ENCODE measurements at regions of chr7 and their contacts with region 1.

Region 1: DNA sequence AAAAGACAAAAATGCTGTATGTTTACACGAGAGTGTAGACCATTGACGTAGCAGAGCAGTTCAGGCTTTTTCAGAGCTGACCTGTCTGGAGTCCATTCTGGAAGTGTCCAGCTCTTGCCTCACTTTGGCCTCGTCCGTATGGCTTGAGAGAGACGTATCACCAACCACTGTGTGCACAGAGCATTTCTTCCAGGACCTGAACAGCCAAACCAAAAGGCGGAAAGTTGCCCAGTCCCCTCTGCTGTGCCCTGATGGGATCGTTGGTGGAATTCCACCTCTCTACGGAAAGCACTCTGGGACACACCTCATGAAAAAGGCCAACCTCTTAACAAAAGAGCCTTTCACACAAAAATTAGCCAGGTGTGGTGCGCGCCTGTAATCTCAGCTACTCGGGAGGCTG is 184.7 kb upstream of the SH2B2 start:
- DNase-seq: no peak
- ATAC-seq: no peak
- H3K4me3 ChIP-seq: no peak overlapping the region
- H3K27ac ChIP-seq: no peak overlapping the region
- H3K4me1 ChIP-seq: no peaks in the 10 kb centered on the region
- H3K27me3 ChIP-seq: no peaks in the 10 kb centered on the region
- CTCF ChIP-seq: no peak

Region 2: DNA sequence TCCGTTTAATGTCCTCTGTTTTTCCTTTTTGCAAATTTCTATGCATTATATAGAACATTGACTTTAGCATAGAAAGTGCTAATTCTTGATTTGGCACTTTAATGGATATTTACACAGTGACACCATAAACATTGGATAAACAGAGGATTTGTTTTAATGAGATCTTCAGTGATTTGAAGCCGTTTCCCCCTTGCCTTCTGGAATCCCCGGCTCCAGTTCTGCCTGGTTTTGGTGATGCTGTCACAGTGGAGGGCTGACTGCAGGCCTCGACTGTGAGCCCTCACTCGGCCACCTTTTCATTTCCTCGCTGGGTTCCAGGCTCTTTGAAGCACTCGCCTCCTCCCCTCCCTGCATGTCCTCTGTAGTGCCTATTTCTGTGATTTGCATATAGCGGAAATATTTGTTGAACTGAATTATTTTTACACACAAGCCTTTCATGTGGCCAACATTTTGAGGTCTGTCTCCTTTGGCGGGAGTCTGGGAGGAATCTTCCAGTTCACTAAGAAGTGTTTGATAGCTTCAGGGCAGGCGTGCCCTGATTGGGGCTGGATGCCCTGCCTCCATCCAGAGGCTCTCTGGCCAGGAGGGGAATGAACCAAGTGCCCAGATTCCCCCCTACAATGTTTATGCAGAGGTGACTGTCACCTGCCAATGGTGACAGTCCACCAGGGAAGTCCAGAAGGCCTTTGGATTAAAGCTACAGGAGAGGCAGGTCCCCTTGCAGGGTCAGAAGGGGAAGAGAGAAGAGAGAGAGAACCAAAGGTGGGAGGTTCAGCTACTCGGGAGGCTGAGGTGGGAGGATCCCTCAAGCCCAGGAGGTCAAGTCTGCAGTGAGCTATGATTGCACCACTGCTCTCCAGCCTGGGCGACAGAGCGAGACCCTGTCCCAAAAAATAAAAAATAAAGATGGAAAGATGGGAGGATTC is 217.0 kb before region 1 on chr7:
- CTCF ChIA-PET with region 1: no interaction called
- POLR2A ChIA-PET with region 1: interaction called, 11 read pairs
- in situ Hi-C with region 1: no loop called
- intact Hi-C with region 1: no loop called
- DNase-seq: no peak
- ATAC-seq: no peak
- H3K4me3 ChIP-seq: no peak overlapping the region
- H3K27ac ChIP-seq: peak overlapping the region; percentile 89
- H3K4me1 ChIP-seq: peaks cover 55% of the 10 kb centered on the region
- H3K27me3 ChIP-seq: no peaks in the 10 kb centered on the region
- CTCF ChIP-seq: no peak

Region 3: DNA sequence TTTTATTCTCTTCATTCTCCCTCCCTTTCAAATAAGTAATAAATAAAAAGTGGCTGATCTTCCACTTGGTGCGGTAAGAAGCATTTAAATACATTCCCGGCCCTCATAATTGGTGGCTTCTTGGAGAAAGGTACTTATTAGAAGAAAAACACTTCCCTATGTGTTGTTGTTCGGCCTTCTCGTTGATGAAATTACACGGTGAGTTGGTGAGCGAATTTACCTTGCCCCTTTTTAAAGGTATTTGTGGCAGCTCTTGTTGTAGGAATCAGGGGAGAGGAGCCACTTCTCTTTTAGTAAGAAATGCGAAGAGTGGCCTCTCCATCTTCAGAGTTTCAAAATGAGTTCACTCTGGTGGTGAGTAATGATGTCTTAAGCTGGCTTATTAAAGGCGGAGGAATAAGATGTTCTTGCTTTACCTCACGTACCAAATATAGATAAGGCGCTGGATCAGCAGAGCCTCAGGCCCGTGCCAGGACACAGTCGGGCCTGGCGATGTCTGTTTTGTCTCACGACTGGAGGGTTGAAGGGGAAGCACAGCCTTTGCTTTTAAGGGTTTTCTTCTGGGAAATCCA is 148.6 kb before region 1 on chr7:
- CTCF ChIA-PET with region 1: no interaction called
- POLR2A ChIA-PET with region 1: no interaction called
- in situ Hi-C with region 1: no loop called
- intact Hi-C with region 1: no loop called
- DNase-seq: no peak
- ATAC-seq: no peak
- H3K4me3 ChIP-seq: no peak overlapping the region
- H3K27ac ChIP-seq: no peak overlapping the region
- H3K4me1 ChIP-seq: no peaks in the 10 kb centered on the region
- H3K27me3 ChIP-seq: no peaks in the 10 kb centered on the region
- CTCF ChIP-seq: no peak

Region 4: DNA sequence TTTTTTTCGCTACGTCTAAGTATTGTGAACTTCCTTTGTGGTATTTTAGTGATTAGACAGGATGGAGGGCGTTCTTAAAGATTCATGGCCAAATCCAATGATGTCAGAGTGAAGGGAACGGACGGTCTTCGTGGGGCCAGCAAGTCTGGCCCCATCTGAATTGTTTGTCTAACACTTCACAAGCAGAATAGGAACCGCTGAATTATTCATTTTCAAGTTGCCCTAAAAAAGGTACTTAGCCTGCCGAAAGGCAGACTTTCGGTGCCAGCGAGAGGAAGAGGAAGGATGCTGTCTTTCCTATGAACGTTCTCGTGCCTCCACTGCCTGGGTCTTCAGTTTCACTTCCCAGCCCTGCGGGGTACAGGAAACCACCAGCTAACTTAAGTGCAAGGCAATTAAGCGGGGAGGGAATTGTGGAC is 39.0 kb after region 1 on chr7:
- CTCF ChIA-PET with region 1: no interaction called
- POLR2A ChIA-PET with region 1: no interaction called
- in situ Hi-C with region 1: no loop called
- intact Hi-C with region 1: no loop called
- DNase-seq: no peak
- ATAC-seq: no peak
- H3K4me3 ChIP-seq: no peak overlapping the region
- H3K27ac ChIP-seq: no peak overlapping the region
- H3K4me1 ChIP-seq: no peaks in the 10 kb centered on the region
- H3K27me3 ChIP-seq: no peaks in the 10 kb centered on the region
- CTCF ChIP-seq: no peak

Region 5: GRCh38 chr7:102456327-102456726 is 354.4 kb after region 1 on chr7:
- CTCF ChIA-PET with region 1: no interaction called
- POLR2A ChIA-PET with region 1: no interaction called
- in situ Hi-C with region 1: no loop called
- intact Hi-C with region 1: no loop called
- DNase-seq: no peak
- ATAC-seq: no peak
- H3K4me3 ChIP-seq: no peak overlapping the region
- H3K27ac ChIP-seq: no peak overlapping the region
- H3K4me1 ChIP-seq: peaks cover 9% of the 10 kb centered on the region
- H3K27me3 ChIP-seq: no peaks in the 10 kb centered on the region
- CTCF ChIP-seq: no peak

Measured in Panc1 (cell line).